CD8-positive, alpha-beta T cell (primary cell): ENCODE measurements at regions of chr11 and their contacts with region 1.

Region 1: DNA sequence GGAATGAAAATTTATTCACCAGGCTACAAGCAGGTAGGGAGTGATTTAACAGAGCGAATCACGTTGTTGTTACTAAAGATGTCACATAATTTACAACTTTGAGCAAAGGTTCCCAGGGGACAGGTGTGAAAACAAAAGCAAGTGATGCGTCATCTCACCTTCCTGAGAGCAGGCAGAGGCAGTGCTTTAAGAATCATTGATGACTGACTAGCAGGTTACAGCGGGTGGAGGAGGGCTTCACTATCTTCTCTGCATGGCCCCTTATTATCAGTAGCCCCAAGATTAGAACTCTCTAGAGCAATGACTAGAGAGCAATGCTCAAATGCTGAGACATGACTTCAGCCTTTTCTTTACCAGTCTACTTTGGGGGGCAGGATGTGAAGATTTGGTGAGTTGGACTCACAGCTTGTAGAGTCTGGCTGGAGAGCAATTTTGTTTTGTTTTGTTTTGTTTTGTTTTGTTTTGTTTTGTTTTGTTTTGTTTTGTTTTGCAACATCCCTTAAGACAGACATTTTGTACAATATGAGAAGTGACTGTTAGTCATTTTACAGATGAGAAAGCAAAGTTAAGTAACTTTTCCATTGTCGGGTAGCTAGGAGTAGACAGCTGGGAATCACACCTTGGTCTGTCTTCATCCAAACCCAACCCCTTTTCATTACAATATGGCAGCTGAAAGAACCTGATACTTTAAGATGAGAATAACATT is 84.8 kb downstream of the SLC1A2 start:
- DNase-seq: peak in 4 of 9 experiments; percentile 25 to 76 (median 63)
- ATAC-seq: peak; percentile 45
- H3K4me3 ChIP-seq: no peak overlapping the region
- H3K4me3 Mint-ChIP-seq: no peak overlapping the region
- H3K27ac ChIP-seq: no peak overlapping the region
- H3K27ac Mint-ChIP-seq: peak overlapping the region; percentile 89
- H3K4me1 ChIP-seq: peaks cover 28% of the 10 kb centered on the region
- H3K4me1 Mint-ChIP-seq: peaks cover 47% of the 10 kb centered on the region
- H3K27me3 ChIP-seq: no peaks in the 10 kb centered on the region
- H3K27me3 Mint-ChIP-seq: no peaks in the 10 kb centered on the region
- CTCF ChIP-seq: no peak

Region 2: GRCh38 chr11:34745195-34745594 is 589.3 kb before region 1 on chr11:
- CTCF ChIA-PET with region 1: no interaction called
- POLR2A ChIA-PET with region 1: no interaction called
- intact Hi-C with region 1: no loop called
- DNase-seq: no peak
- ATAC-seq: no peak
- H3K4me3 ChIP-seq: no peak overlapping the region
- H3K4me3 Mint-ChIP-seq: no peak overlapping the region
- H3K27ac ChIP-seq: no peak overlapping the region
- H3K27ac Mint-ChIP-seq: no peak overlapping the region
- H3K4me1 ChIP-seq: no peaks in the 10 kb centered on the region
- H3K4me1 Mint-ChIP-seq: no peaks in the 10 kb centered on the region
- H3K27me3 ChIP-seq: peaks cover 0 to 2% of the 10 kb centered on the region in 2 experiments
- H3K27me3 Mint-ChIP-seq: peaks cover 11% of the 10 kb centered on the region
- CTCF ChIP-seq: no peak

Region 3: GRCh38 chr11:35050541-35050995 is 284.0 kb before region 1 on chr11:
- CTCF ChIA-PET with region 1: no interaction called
- POLR2A ChIA-PET with region 1: no interaction called
- intact Hi-C with region 1: no loop called
- DNase-seq: peak in 2 of 9 experiments; percentile 18 to 45
- ATAC-seq: no peak
- H3K4me3 ChIP-seq: peak overlapping the region in 1 of 2 experiments; percentile 8
- H3K4me3 Mint-ChIP-seq: peak overlapping the region; percentile 70
- H3K27ac ChIP-seq: peak overlapping the region in 1 of 2 experiments; percentile 9
- H3K27ac Mint-ChIP-seq: peak overlapping the region; percentile 87
- H3K4me1 ChIP-seq: peaks cover 50% of the 10 kb centered on the region
- H3K4me1 Mint-ChIP-seq: peaks cover 64% of the 10 kb centered on the region
- H3K27me3 ChIP-seq: no peaks in the 10 kb centered on the region
- H3K27me3 Mint-ChIP-seq: no peaks in the 10 kb centered on the region
- CTCF ChIP-seq: no peak

Region 4: GRCh38 chr11:35288817-35289541 is 45.6 kb before region 1 on chr11:
- CTCF ChIA-PET with region 1: no interaction called
- POLR2A ChIA-PET with region 1: no interaction called
- intact Hi-C with region 1: no loop called
- DNase-seq: no peak
- ATAC-seq: no peak
- H3K4me3 ChIP-seq: no peak overlapping the region
- H3K4me3 Mint-ChIP-seq: no peak overlapping the region
- H3K27ac ChIP-seq: no peak overlapping the region
- H3K27ac Mint-ChIP-seq: no peak overlapping the region
- H3K4me1 ChIP-seq: no peaks in the 10 kb centered on the region
- H3K4me1 Mint-ChIP-seq: peaks cover 5% of the 10 kb centered on the region
- H3K27me3 ChIP-seq: peaks cover 0 to 4% of the 10 kb centered on the region in 2 experiments
- H3K27me3 Mint-ChIP-seq: no peaks in the 10 kb centered on the region
- CTCF ChIP-seq: no peak

Region 5: GRCh38 chr11:35344681-35345574 is 10.4 kb after region 1 on chr11:
- CTCF ChIA-PET with region 1: interaction called, 3 read pairs
- POLR2A ChIA-PET with region 1: interaction called, 3 read pairs
- intact Hi-C with region 1: loop called in 1 of 2 experiments (anchors 2 kb)
- DNase-seq: no peak
- ATAC-seq: no peak
- H3K4me3 ChIP-seq: no peak overlapping the region
- H3K4me3 Mint-ChIP-seq: no peak overlapping the region
- H3K27ac ChIP-seq: no peak overlapping the region
- H3K27ac Mint-ChIP-seq: peak overlapping the region; percentile 56
- H3K4me1 ChIP-seq: peaks cover 53% of the 10 kb centered on the region
- H3K4me1 Mint-ChIP-seq: peaks cover 55% of the 10 kb centered on the region
- H3K27me3 ChIP-seq: no peaks in the 10 kb centered on the region
- H3K27me3 Mint-ChIP-seq: no peaks in the 10 kb centered on the region
- CTCF ChIP-seq: no peak